H1 (cell line): ENCODE measurements at regions of chr4 and their contacts with region 1.

Region 1: DNA sequence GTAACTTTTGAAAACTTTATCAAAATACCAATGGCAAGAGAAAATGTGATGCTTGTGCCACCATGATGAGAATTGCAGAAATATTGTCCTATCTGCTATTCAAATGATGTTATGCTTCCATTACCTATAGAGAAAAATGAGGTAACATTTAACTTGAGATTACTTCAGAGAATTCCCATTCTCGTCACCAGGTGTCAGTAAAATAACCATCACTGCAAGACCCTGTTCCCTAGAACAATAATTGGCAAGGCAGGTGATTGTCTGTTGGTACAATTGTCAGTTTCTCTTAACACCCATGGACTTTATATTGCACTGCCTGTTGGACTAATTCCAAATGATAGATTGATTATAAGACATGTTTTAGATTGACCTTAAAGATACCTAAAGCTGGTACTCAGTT is 179.9 kb downstream of the GABRG1 start:
- DNase-seq: no peak
- H3K4me3 ChIP-seq: no peak overlapping the region
- H3K27ac ChIP-seq: no peak overlapping the region
- H3K4me1 ChIP-seq: no peaks in the 10 kb centered on the region
- H3K27me3 ChIP-seq: no peaks in the 10 kb centered on the region
- CTCF ChIP-seq: peak in 2 of 3 experiments; percentile 17 to 39; a peak in 2 of 4 replicates
- EP300 ChIP-seq: no peak
- POLR2A ChIP-seq: no peak
- RAD21 ChIP-seq: peak; percentile 60 to 63

Region 2: DNA sequence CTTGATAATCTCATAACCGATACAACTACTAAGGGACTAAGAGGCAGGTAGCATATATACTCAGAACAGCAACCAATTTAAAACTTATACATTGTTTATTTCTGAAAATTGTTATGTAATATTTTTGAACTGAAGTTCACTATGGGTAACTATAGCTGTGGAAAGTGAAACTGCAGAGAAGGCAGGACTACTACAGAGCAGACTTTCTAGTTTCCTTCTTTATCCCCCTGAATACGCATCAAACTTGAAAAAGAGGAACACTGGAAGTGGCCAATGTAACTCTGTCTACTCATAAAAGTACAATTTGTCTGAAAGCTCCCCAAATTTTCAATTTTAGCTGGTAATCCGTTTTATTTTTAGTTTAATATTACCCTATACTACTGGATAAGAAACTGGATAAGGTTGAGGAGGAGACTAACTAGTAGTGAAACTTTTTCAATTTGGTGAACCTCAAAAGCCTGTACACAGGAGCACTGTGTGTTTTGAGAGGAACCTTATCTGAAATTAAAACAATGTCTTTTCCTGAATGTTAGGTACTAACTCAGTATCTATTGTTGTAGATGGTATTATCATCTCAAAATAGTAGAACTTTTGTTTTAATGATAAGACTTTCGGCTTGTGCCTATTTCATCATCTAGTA is 45.9 kb before region 1 on chr4:
- CTCF ChIA-PET with region 1: no interaction called
- POLR2A ChIA-PET with region 1: no interaction called
- DNase-seq: no peak
- H3K4me3 ChIP-seq: no peak overlapping the region
- H3K27ac ChIP-seq: no peak overlapping the region
- H3K4me1 ChIP-seq: no peaks in the 10 kb centered on the region
- H3K27me3 ChIP-seq: no peaks in the 10 kb centered on the region
- CTCF ChIP-seq: no peak
- EP300 ChIP-seq: no peak
- POLR2A ChIP-seq: no peak
- RAD21 ChIP-seq: no peak

Region 3: GRCh38 chr4:45957353-45957752 is 13.4 kb after region 1 on chr4:
- CTCF ChIA-PET with region 1: interaction called, 10 read pairs
- POLR2A ChIA-PET with region 1: no interaction called
- DNase-seq: no peak
- H3K4me3 ChIP-seq: no peak overlapping the region
- H3K27ac ChIP-seq: no peak overlapping the region
- H3K4me1 ChIP-seq: no peaks in the 10 kb centered on the region
- H3K27me3 ChIP-seq: no peaks in the 10 kb centered on the region
- CTCF ChIP-seq: no peak
- EP300 ChIP-seq: no peak
- POLR2A ChIP-seq: no peak
- RAD21 ChIP-seq: no peak